CD14-positive monocyte (primary cell): ENCODE measurements at regions of chr3 and their contacts with region 1.

Region 1: DNA sequence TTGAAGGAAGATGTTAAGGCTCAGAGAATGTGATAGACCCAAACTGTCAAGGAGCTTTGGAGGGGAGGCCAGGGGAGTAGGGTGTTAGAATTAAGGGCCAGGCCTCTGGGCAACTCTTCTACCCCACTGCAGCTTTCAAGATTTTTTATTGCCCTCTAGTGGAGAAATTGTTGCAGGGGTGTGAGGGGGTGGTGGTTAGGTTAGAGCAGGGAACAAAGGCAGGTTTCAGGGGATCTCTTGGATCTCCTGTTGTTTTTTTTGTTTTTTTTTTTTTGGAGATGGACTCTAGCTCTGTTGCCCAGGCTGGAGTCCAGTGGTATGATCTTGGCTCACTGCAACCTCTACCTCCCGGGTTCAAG is 1.4 kb upstream of the SEC13 start:
- DNase-seq: peak in 2 of 3 donors; percentile 13 to 23
- H3K4me3 ChIP-seq: no peak overlapping the region
- H3K4me3 Mint-ChIP-seq: no peak overlapping the region
- H3K27ac ChIP-seq: no peak overlapping the region
- H3K27ac Mint-ChIP-seq: peak overlapping the region in 5 of 7 donors; percentile 21 to 96 (median 75)
- H3K4me1 ChIP-seq: peaks cover 16 to 22% of the 10 kb centered on the region in 2 donors
- H3K4me1 Mint-ChIP-seq: peaks cover 21% of the 10 kb centered on the region
- H3K27me3 ChIP-seq: no peaks in the 10 kb centered on the region
- H3K27me3 Mint-ChIP-seq: peaks cover 6 to 13% (median 6%) of the 10 kb centered on the region in 3 donors
- CTCF ChIP-seq: peak; percentile 39

Region 2: GRCh38 chr3:9932843-9933560 is 389.3 kb before region 1 on chr3:
- intact Hi-C with region 1: loop called in 1 of 2 experiments (anchors 10 kb)
- DNase-seq: peak; percentile 76 to 79 (median 78)
- H3K4me3 ChIP-seq: peak overlapping the region; percentile 41 to 85 (median 69)
- H3K4me3 Mint-ChIP-seq: peak overlapping the region; percentile 92 to 97
- H3K27ac ChIP-seq: peak overlapping the region; percentile 83 to 92
- H3K27ac Mint-ChIP-seq: peak overlapping the region; percentile 94 to 99 (median 97)
- H3K4me1 ChIP-seq: peaks cover 25 to 38% of the 10 kb centered on the region in 2 donors
- H3K4me1 Mint-ChIP-seq: peaks cover 30% of the 10 kb centered on the region
- H3K27me3 ChIP-seq: no peaks in the 10 kb centered on the region
- H3K27me3 Mint-ChIP-seq: peaks cover 0 to 2% (median 0%) of the 10 kb centered on the region in 3 donors
- CTCF ChIP-seq: peak; percentile 87

Region 3: DNA sequence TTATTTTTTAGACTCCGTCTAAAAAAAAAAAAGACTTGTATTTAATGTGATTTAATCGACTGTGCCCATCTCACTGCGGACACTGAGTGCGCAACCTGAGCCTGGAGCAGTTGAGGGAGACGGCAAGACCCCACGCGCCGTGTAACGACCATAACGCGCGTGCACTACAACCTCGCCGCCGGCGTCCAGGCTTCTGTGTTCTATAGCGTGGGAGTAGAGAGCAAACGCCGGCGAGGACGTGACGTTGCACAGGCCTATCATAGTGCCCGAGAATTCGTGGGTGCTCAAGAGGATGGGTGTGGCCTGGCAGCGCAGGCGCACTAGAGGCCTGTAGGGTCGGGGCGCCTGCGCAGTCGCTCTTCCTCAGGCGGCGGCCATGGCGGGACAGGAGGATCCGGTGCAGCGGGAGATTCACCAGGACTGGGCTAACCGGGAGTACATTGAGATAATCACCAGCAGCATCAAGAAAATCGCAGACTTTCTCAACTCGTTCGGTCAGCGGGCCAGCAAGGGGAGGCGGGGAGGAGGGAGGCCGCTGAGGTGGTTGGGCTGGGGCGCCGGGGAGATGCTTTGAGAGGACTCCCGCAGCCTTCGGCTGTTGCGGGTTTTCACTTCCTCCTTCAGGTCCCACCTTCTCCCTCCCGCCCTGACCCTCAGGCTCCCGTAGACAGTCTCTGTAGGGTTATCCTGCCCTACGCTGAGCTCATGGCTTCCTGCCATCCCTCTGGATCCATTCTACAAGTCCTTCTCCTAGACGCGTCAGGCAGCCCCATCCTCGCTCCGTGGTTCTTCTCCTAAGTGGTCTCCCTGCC is 206.8 kb before region 1 on chr3 and contains the start of gene BRK1:
- intact Hi-C with region 1: loop called in 1 of 2 experiments (anchors 2 kb)
- DNase-seq: peak; percentile 96 to 98 (median 97)
- H3K4me3 ChIP-seq: peak within 1 kb of the TSS; percentile 90 to 97 (median 96)
- H3K4me3 Mint-ChIP-seq: peak within 1 kb of the TSS; percentile 99 to 100
- H3K27ac ChIP-seq: peak within 1 kb of the TSS; percentile 78 to 96
- H3K27ac Mint-ChIP-seq: peak within 1 kb of the TSS; percentile 92 to 98 (median 97)
- H3K4me1 ChIP-seq: peaks cover 21% of the 10 kb centered on the region in 2 donors
- H3K4me1 Mint-ChIP-seq: peaks cover 21% of the 10 kb centered on the region
- H3K27me3 ChIP-seq: no peaks in the 10 kb centered on the region
- H3K27me3 Mint-ChIP-seq: peaks cover 3 to 8% (median 5%) of the 10 kb centered on the region in 3 donors
- CTCF ChIP-seq: no peak
- polyA plus RNA-seq, gene BRK1: 144 to 318 (median 295) TPM

Region 4: GRCh38 chr3:10192953-10193691 is 129.2 kb before region 1 on chr3:
- intact Hi-C with region 1: no loop called
- DNase-seq: peak; percentile 75 to 92 (median 80)
- H3K4me3 ChIP-seq: no peak overlapping the region
- H3K4me3 Mint-ChIP-seq: no peak overlapping the region
- H3K27ac ChIP-seq: peak overlapping the region in 1 of 2 donors; percentile 81
- H3K27ac Mint-ChIP-seq: peak overlapping the region; percentile 81 to 97 (median 93)
- H3K4me1 ChIP-seq: peaks cover 83 to 88% of the 10 kb centered on the region in 2 donors
- H3K4me1 Mint-ChIP-seq: peaks cover 86% of the 10 kb centered on the region
- H3K27me3 ChIP-seq: no peaks in the 10 kb centered on the region
- H3K27me3 Mint-ChIP-seq: peaks cover 0 to 7% (median 0%) of the 10 kb centered on the region in 3 donors
- CTCF ChIP-seq: peak; percentile 51

Region 5: GRCh38 chr3:10357592-10358308 is 35.4 kb after region 1 on chr3:
- intact Hi-C with region 1: no loop called
- DNase-seq: peak in 2 of 3 donors; percentile 14 to 52
- H3K4me3 ChIP-seq: no peak overlapping the region
- H3K4me3 Mint-ChIP-seq: no peak overlapping the region
- H3K27ac ChIP-seq: no peak overlapping the region
- H3K27ac Mint-ChIP-seq: peak overlapping the region in 2 of 7 donors; percentile 10 to 17
- H3K4me1 ChIP-seq: peaks cover 4 to 6% of the 10 kb centered on the region in 2 donors
- H3K4me1 Mint-ChIP-seq: peaks cover 14% of the 10 kb centered on the region
- H3K27me3 ChIP-seq: no peaks in the 10 kb centered on the region
- H3K27me3 Mint-ChIP-seq: peaks cover 0 to 4% (median 4%) of the 10 kb centered on the region in 3 donors
- CTCF ChIP-seq: no peak